IMR-90 (cell line): ENCODE measurements at regions of chr19 and their contacts with region 1.

Region 1: DNA sequence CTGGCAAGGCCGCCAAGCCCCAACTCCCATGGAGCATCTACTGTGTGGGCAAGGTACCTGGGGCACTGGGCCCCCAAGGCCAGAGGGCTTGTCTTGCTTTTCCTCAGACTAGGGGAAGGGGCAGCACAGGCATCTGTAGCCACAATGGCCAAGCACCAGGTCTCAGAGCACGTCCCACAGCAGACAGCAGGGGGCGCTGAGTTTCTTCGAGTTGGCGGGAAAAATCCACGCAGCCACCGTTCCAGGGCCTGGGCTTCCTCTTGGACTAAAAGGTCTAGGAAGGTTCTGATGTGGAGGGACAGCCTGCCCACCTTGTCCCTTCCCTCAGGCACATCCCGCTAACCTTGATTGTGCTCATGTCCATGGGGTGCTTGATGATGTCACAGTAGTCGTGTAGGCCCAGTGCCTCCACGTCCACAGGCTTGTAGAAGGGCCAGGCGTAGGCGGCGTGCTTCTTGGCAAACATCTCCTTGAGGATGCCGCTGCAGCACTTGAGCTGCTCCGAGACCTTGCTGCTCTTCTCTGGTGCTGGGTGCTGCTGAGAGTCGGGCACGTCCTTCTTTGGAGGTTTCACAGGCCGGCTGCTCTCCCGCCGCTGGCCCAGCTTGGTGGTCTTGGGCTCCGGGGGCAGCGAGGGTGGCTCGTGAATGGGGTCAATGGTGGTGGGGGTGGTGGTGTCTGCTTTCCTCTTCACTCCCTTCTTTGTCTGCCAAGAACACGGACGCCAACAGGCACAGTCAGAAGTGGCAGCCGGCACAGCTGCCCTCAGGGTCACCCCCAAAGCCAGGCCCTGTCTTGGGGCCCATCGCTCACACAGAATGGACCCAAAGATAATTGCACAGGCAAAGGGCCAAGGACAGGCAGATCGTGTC is 32.0 kb upstream of the EPHX3 start:
- DNase-seq: peak; percentile 65
- ATAC-seq: peak; percentile 38
- H3K4me3 ChIP-seq: no peak overlapping the region
- H3K27ac ChIP-seq: peak overlapping the region; percentile 7; the same call in 1 of the 2 replicates
- H3K4me1 ChIP-seq: peaks cover 31% of the 10 kb centered on the region
- H3K27me3 ChIP-seq: no peaks in the 10 kb centered on the region
- CTCF ChIP-seq: peak; percentile 68
- POLR2A ChIP-seq: no peak
- RAD21 ChIP-seq: peak; percentile 78

Region 2: DNA sequence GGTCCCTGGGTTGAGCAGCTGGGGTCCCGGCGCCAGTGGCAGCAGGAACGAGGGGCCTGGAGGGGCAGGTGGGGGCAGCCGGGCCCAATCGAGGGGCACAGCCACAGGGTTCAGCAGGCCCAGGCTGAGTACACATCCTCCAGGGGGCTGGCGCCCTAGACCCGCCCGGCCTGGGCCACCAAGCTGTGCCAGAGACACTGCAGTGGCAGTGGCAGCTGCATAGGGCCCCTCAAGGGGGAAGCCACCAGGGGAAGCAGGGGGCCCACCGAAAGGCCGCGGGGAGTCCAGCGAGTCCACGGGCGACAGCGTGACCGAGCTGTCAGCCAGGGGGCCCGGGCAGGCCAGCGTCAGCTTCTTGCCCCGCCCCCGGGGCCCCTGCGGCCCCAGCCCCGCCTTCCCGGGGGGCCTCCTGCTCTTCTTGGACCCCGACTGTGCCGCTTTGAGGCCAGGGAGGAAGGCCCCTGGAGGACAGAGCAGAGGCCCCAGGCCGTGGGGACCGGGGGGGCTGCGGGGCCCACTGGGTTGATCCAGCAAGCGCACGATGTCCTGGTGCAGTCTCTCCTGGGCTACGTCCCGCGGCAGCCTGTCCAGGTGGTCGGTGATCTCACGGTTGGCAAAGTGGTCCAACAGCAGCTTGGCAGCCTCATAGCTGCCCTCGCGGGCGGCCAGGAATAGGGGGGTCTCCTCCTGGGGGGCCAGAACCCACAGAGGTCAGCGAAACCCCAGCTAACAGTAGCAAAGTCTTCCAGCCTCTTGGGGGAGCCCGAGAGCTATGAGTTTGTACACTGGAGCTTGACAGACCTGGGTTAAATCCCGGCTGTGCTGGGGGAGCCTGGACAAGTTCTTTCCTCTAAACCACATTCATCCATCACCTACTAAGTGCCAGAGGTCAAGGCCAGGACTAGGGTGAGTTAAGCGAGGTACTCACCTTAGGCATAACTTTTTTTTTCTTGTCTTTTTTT is 103.0 kb before region 1 on chr19:
- CTCF ChIA-PET with region 1: no interaction called
- POLR2A ChIA-PET with region 1: no interaction called
- dilution Hi-C with region 1: no loop called
- in situ Hi-C with region 1: no loop called
- intact Hi-C with region 1: no loop called
- DNase-seq: peak; percentile 18
- ATAC-seq: peak; percentile 63; the same call in 1 of the 2 replicates
- H3K4me3 ChIP-seq: no peak overlapping the region
- H3K27ac ChIP-seq: no peak overlapping the region
- H3K4me1 ChIP-seq: no peaks in the 10 kb centered on the region
- H3K27me3 ChIP-seq: no peaks in the 10 kb centered on the region
- CTCF ChIP-seq: peak; percentile 27; the same call in 1 of the 2 replicates
- POLR2A ChIP-seq: no peak
- RAD21 ChIP-seq: peak; percentile 34; the same call in 1 of the 2 replicates

Region 3: DNA sequence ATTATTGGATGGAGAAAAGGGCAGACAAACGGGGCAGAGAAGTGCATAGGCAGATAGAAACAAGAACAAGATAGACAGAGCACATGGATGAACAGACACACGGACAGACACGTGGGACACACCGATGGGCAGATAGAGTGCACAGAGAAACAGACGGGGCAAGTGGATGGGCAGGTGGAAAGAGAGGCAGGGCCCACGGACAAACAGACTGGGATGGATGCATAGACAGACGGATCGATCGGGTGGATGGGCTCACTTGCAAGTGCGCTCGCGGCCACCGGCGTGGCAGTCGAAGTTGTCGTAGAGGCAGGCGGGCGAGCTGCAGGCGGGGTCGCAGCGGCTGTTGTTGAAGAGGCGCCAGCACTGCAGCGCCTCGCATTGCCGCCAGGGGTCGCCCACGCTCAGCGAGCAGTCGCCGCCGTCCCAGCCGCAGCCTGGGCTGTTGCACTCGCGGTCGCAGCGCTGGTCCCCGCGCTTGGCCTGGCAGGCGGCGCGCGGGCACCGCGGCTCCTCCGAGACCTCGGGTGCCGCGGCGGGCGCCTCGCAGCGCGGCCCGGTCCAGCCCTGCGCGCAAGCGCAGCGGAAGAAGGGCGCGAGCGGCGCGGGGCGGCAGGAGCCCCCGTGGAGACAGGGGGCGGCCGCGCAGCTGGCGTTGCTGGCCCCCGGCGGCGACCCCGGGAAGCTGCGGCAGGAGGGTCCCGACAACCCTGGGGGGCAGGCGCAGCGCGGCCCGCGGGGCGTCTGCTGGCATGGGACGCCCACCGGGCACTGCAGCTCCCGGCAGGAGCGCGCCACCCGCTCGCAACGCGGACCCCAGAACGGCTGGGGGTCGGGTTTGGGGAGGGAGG is 86.8 kb before region 1 on chr19:
- CTCF ChIA-PET with region 1: no interaction called
- POLR2A ChIA-PET with region 1: no interaction called
- dilution Hi-C with region 1: no loop called
- in situ Hi-C with region 1: no loop called
- intact Hi-C with region 1: no loop called
- DNase-seq: peak; percentile 64
- ATAC-seq: peak; percentile 99
- H3K4me3 ChIP-seq: no peak overlapping the region
- H3K27ac ChIP-seq: no peak overlapping the region
- H3K4me1 ChIP-seq: peaks cover 2% of the 10 kb centered on the region; the same call in 1 of the 2 replicates
- H3K27me3 ChIP-seq: no peaks in the 10 kb centered on the region
- CTCF ChIP-seq: peak; percentile 98
- POLR2A ChIP-seq: no peak
- RAD21 ChIP-seq: peak; percentile 97

Region 4: DNA sequence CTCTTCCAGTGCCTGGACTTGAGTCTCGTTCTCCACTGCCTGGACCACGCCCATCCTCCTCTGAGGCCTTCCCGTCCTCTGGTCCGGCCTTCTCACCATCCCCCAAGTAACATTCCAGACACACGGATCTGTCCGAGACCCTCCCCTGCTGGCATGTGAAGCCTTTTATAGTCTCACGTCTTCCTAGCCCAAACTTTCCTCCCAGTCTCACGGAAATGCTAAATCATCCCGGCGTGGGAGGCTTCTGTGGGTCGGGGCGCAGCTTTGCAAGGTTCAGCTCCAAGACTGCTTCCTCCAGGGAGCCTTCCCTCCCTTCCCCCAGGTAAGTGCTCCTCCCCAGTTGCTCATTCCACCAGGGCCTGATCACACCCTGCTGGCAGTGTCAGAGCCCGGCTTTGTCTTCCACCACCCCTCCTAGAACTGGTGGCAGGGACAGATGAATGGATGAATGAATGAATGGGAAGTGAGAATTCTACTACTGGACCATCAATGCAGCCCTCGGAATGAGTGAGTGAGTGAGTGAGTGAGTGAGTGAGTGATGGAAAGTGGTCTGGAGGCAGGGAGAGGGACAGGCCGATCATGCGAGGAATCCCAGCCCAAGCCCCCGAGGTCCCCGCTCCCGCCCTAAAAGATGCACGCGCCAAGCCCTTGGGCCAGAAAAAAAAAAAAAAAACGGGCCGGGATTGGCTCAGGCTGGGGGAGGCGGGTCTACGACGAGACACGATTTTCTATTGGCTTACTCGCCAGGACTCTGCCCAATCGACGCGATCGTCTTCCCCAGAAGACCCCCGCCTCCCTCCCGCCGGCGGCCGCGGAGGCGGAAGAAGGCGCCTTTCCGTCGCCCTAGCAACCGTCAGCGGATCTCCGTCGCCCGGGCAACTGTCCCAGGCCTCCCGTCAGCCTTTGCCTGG is 41.3 kb before region 1 on chr19:
- CTCF ChIA-PET with region 1: no interaction called
- POLR2A ChIA-PET with region 1: no interaction called
- dilution Hi-C with region 1: no loop called
- in situ Hi-C with region 1: no loop called
- intact Hi-C with region 1: no loop called
- DNase-seq: peak; percentile 95
- ATAC-seq: peak; percentile 99
- H3K4me3 ChIP-seq: peak overlapping the region; percentile 73
- H3K27ac ChIP-seq: peak overlapping the region; percentile 74; the same call in 1 of the 2 replicates
- H3K4me1 ChIP-seq: peaks cover 8% of the 10 kb centered on the region
- H3K27me3 ChIP-seq: no peaks in the 10 kb centered on the region
- CTCF ChIP-seq: no peak
- POLR2A ChIP-seq: no peak
- RAD21 ChIP-seq: no peak

Region 5: DNA sequence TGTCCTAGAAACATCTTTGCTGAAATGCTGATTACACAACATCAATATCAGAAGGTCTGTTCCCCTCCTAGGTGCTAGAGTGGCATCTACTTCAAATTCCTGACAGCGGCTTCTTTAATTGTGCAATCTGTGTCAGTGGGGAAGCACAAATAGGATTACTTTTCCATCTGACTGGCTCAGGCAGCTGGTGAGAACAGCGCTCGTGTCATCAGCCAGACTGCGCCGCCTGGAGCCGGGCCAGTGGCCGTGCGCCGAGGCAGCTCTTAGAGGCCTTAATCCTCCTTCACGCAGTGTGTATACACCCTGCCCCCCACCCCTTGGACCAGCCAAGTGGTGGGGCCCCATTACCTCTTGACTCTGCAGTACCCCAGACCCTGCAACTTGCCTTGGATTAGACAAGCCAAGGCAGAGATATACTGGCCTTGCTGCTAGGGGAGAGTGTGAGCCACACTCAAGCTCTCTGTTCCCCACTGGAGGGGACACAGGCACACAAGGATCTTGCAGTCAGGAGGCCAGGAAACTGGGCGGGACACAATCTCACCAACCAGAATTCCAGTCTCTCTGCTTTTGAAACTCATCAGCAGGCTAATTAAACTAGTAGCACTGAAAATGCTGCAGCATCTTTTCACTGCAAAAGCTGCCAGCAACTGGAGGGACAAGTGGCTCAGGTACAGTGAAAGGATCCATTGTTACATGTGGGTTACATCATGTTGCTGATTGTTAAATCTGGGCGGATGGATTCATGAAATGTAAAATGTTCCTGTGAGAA is 16.8 kb after region 1 on chr19:
- CTCF ChIA-PET with region 1: interaction called, 3 read pairs
- POLR2A ChIA-PET with region 1: no interaction called
- dilution Hi-C with region 1: no loop called
- in situ Hi-C with region 1: no loop called
- intact Hi-C with region 1: loop called (anchors 2 kb)
- DNase-seq: peak; percentile 89
- ATAC-seq: peak; percentile 84
- H3K4me3 ChIP-seq: no peak overlapping the region
- H3K27ac ChIP-seq: peak overlapping the region; percentile 51; the same call in 1 of the 2 replicates
- H3K4me1 ChIP-seq: peaks cover 50% of the 10 kb centered on the region
- H3K27me3 ChIP-seq: no peaks in the 10 kb centered on the region
- CTCF ChIP-seq: peak; percentile 42
- POLR2A ChIP-seq: no peak
- RAD21 ChIP-seq: peak; percentile 45

Region 6: DNA sequence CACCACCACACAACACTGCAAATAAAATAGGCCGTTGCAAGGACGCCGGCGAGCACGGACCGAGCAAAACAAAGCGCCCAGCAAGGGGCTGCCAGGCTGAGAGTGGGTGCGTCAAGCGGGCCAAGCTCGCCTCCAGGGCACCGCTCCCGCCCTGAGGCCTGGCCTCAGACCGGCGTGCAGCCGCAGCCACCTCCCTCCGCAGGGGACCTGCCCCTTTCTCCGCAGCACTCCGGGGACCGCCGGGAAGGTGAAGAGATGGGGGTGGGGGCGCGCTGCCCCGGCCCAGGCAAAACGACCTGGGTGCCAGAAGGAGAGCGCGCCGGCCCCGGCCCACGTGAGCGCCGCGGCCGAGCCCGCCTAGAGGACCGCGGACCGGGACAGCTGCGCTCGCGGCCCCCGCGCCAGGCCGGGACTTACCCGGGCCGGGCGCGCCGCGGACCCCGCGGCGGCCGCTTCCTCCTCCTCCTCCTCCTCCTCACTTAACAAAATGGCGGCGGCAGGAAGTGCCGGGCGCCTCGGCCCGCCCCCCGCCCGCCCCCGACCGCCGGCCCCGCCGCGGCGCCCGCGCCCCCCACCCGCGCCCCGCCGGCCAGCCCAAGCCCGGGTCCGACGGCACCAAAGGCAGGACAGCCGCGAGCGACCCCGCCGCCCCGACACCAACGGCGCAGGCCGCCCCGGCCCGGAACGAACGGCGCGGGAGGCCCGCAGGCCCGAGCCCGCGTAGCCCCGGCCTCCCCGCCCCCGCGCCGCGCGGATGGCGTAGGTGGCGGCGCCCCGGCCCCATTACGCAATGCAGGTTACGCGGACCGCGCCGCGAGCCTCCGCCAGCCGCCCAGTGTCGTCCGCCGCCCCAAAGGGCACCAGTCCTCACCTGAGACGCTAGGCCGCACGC is 67.4 kb after region 1 on chr19:
- CTCF ChIA-PET with region 1: no interaction called
- POLR2A ChIA-PET with region 1: no interaction called
- dilution Hi-C with region 1: no loop called
- in situ Hi-C with region 1: no loop called
- intact Hi-C with region 1: loop called (anchors 2 kb)
- DNase-seq: no peak
- ATAC-seq: peak; percentile 63
- H3K4me3 ChIP-seq: peak overlapping the region; percentile 80
- H3K27ac ChIP-seq: peak overlapping the region; percentile 96
- H3K4me1 ChIP-seq: peaks cover 14% of the 10 kb centered on the region
- H3K27me3 ChIP-seq: no peaks in the 10 kb centered on the region
- CTCF ChIP-seq: no peak
- POLR2A ChIP-seq: peak; percentile 54
- RAD21 ChIP-seq: no peak